ENCODE measurements at regions of chr18 and their contacts with region 1.

Region 1: GRCh38 chr18:50878345-50879301 is at the start of gene ME2:
- DNase-seq: peak; percentile 81 to 98 (median 92)
- H3K4me3 ChIP-seq: peak within 1 kb of the TSS; percentile 64 to 99 (median 91)
- H3K27ac ChIP-seq: peak within 1 kb of the TSS; percentile 44 to 96 (median 88)
- H3K27me3 ChIP-seq: no peaks in the 10 kb centered on the region
- CTCF ChIP-seq: peak in 12 of 56 donors; percentile 3 to 30 (median 14)
- total RNA-seq, gene ME2: 31.2 to 57.8 (median 42.9) TPM

Region 2: GRCh38 chr18:50240083-50240563 is 638.5 kb before region 1 on chr18:
- intact Hi-C with region 1: no loop called
- DNase-seq: no peak
- H3K4me3 ChIP-seq: no peak overlapping the region
- H3K27ac ChIP-seq: no peak overlapping the region
- H3K27me3 ChIP-seq: no peaks in the 10 kb centered on the region
- CTCF ChIP-seq: no peak

Region 3: DNA sequence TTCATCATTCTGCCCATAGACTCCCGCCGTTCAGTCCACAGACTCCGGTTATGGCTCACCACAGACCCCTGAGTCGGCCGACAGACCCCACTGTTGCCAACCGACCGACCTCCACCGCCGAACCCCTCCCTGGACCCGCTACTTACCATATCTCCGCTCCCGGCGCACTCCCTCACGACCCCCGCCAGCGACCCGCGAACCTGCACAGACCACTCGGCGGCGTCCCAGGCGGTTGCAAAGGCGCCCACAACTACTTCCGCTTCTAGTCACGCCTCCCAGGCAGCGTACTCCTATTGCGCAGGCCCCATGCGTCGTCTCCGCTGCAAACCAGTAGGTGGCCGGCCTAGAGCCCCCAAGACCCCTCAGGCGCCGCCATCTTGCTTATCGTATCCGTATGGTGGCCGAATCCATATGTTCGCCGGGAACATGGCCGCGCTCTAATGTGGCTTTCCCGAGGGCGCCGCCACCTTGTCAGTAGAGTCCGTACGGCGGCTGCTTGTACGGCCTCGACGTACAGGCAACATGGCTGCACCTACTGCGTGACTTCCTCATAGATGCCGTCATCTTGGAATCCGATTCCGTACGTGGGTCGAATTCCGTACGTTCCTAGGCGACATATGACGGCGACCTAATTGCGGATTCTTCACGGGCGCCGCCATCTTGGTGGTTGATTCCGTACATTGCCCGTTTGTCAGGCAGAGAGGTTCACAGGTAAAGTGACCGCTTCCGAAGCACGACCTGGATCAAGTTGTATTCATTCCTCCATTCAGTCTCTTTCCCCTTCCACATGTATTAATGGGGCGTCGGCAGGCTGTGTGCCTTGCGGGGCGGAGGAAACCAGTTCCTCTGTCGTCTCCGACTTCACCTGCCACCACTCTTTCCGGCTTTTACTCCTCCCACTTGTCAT is 590.9 kb before region 1 on chr18 and contains the start of gene CXXC1:
- intact Hi-C with region 1: loop called in 1 of 2 experiments (anchors 10 kb)
- DNase-seq: peak; percentile 97 to 100 (median 99)
- H3K4me3 ChIP-seq: peak within 1 kb of the TSS; percentile 52 to 98 (median 83)
- H3K27ac ChIP-seq: peak within 1 kb of the TSS; percentile 68 to 98 (median 93)
- H3K27me3 ChIP-seq: no peaks in the 10 kb centered on the region
- CTCF ChIP-seq: peak in 52 of 56 donors; percentile 25 to 70 (median 53)
- total RNA-seq, gene CXXC1: 39.4 to 103 (median 69.4) TPM

Region 4: GRCh38 chr18:50819728-50820378 is 58.8 kb before region 1 on chr18 and contains the start of gene MRO:
- intact Hi-C with region 1: loop called (anchors 1 to 2 kb)
- DNase-seq: peak; percentile 83 to 94 (median 86)
- H3K4me3 ChIP-seq: peak within 1 kb of the TSS; percentile 27 to 75 (median 55)
- H3K27ac ChIP-seq: peak within 1 kb of the TSS in 58 of 59 donors; percentile 3 to 91 (median 74)
- H3K27me3 ChIP-seq: no peaks in the 10 kb centered on the region
- CTCF ChIP-seq: peak; percentile 84 to 99 (median 91)
- total RNA-seq, gene MRO: 18.3 to 117 (median 41.7) TPM

Region 5: GRCh38 chr18:50853863-50854271 is 24.8 kb before region 1 on chr18:
- intact Hi-C with region 1: no loop called
- DNase-seq: no peak
- H3K4me3 ChIP-seq: no peak overlapping the region
- H3K27ac ChIP-seq: no peak overlapping the region
- H3K27me3 ChIP-seq: no peaks in the 10 kb centered on the region
- CTCF ChIP-seq: no peak

Region 6: DNA sequence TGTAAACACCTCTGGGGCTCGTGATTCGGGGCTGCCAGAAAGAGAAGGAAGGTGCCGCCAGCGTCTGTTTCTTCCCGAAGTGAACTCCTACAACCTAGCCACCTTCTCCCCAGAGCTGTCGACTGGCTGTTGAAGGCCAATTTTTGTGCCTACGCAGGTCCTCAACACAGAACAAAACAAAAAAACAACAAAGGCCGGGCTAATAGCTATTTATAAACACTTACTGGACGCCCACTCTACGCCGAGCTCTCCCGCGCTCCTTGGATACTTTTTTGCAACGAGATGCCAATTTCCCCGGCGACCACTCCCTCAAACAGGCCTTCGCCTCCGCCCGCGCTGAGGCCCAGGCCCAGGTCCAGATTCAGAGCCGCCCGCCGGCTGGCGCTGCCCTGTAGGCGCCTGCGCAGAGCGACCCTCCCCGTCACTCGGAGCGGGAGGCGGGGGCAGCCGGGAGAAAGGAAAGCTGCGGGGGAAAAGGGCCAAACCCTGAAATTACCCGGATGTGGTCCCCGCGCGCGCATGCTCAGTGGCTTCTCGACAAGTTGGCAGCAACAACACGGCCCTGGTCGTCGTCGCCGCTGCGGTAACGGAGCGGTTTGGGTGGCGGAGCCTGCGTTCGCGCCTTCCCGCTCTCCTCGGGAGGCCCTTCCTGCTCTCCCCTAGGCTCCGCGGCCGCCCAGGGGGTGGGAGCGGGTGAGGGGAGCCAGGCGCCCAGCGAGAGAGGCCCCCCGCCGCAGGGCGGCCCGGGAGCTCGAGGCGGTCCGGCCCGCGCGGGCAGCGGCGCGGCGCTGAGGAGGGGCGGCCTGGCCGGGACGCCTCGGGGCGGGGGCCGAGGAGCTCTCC is 151.3 kb after region 1 on chr18 and contains the start of gene SMAD4:
- intact Hi-C with region 1: loop called (anchors 2 kb)
- DNase-seq: peak; percentile 90 to 97 (median 94)
- H3K4me3 ChIP-seq: peak within 1 kb of the TSS; percentile 58 to 96 (median 83)
- H3K27ac ChIP-seq: peak within 1 kb of the TSS; percentile 85 to 100 (median 96)
- H3K27me3 ChIP-seq: no peaks in the 10 kb centered on the region
- CTCF ChIP-seq: peak in 31 of 56 donors; percentile 2 to 55 (median 29)
- total RNA-seq, gene SMAD4: 64.8 to 122 (median 86.8) TPM